Transverse colon (tissue), 4 donors: ENCODE measurements at regions of chr6 and their contacts with region 1.

Region 1: GRCh38 chr6:12605888-12606345 is 110.7 kb upstream of the PHACTR1 start:
- DNase-seq: peak; percentile 54
- H3K4me3 ChIP-seq: no peak overlapping the region
- H3K27ac ChIP-seq: no peak overlapping the region
- H3K4me1 ChIP-seq: peaks cover 0 to 13% (median 0%) of the 10 kb centered on the region in 4 donors
- H3K27me3 ChIP-seq: no peaks in the 10 kb centered on the region
- CTCF ChIP-seq: peak; percentile 63 to 79 (median 67)
- EP300 ChIP-seq: no peak
- POLR2A ChIP-seq: no peak

Region 2: DNA sequence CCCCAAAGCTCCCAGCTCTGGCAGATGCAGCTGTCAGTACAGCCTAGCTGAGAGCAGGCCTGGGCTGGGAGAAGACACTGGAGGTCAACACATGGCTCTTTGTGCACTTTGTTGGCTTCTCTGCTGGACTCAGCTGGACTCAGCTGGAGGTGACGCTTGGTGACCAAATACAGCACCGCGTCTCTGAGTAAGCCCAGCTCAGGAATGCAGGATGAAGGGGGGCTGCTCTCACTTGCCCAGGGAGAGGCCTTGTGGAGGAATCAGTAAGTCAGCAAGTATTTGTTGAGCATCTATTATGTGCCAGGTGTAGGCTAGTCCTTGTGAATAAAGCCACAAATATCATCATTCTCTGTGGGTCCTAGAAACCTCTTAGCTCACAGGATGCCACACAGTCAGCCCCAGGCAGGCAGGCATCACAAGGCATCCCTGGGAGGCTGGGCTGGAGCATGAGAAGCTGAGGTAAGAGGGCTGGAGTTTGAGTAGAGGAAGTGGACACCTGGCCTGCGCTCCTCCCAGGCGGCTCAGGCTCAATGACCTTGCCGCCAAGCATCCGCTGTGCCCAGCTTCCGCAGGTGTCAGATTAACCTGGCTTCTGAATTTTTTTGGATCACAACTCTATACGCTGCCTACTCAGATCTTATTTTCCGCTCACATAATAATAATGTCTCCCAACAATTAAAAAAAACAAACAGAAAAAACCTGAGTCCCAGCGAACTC is 973.0 kb before region 1 on chr6:
- in situ Hi-C with region 1: loop called in 2 of 4 experiments (anchors 25 kb)
- intact Hi-C with region 1: no loop called
- DNase-seq: no peak
- H3K4me3 ChIP-seq: no peak overlapping the region
- H3K27ac ChIP-seq: no peak overlapping the region
- H3K4me1 ChIP-seq: no peaks in the 10 kb centered on the region
- H3K27me3 ChIP-seq: no peaks in the 10 kb centered on the region
- CTCF ChIP-seq: no peak
- EP300 ChIP-seq: no peak
- POLR2A ChIP-seq: no peak

Region 3: DNA sequence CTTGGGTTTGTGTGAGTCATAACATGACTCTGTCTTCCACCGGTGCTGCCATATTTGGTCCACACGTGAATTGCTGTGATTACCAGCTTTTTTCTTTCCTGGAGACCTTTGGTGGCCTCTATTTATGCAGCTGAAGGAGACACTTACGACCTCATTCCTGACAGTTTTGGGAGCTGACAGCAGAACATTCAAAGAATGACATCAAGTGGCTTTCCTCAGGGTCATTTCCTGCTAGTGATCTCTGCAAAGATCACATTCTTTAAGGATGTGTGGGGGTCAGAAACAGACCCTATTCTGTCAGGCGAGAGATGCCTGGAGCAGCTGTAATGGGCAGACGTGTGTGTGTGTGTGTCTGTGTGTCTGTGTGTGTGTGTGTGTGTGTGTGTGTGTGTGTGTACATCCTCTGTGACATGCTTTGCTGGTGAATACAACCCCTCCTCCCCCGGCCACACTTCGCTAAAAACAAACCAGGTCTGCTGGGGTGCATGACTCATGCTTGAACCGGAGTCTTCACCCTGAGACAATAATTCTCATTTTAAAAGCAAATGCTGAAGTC is 952.8 kb before region 1 on chr6:
- in situ Hi-C with region 1: loop called (anchors 25 kb)
- intact Hi-C with region 1: no loop called
- DNase-seq: no peak
- H3K4me3 ChIP-seq: no peak overlapping the region
- H3K27ac ChIP-seq: no peak overlapping the region
- H3K4me1 ChIP-seq: peaks cover 4 to 15% (median 10%) of the 10 kb centered on the region in 4 donors
- H3K27me3 ChIP-seq: no peaks in the 10 kb centered on the region
- CTCF ChIP-seq: no peak
- EP300 ChIP-seq: no peak
- POLR2A ChIP-seq: no peak

Region 4: DNA sequence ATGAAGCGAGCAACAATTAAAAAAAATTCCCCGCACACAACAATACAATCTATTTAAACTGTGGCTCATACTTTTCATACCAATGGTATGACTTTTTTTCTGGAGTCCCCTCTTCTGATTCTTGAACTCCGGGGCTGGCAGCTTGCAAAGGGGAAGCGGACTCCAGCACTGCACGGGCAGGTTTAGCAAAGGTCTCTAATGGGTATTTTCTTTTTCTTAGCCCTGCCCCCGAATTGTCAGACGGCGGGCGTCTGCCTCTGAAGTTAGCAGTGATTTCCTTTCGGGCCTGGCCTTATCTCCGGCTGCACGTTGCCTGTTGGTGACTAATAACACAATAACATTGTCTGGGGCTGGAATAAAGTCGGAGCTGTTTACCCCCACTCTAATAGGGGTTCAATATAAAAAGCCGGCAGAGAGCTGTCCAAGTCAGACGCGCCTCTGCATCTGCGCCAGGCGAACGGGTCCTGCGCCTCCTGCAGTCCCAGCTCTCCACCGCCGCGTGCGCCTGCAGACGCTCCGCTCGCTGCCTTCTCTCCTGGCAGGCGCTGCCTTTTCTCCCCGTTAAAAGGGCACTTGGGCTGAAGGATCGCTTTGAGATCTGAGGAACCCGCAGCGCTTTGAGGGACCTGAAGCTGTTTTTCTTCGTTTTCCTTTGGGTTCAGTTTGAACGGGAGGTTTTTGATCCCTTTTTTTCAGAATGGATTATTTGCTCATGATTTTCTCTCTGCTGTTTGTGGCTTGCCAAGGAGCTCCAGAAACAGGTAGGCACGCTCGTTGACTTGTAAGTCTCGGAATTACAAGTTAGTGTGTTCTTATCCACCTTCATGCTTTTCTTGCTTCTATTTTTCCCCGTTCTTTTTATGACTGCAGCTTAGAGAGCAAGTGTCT is 315.7 kb before region 1 on chr6 and contains the start of gene EDN1:
- in situ Hi-C with region 1: loop called in 2 of 4 experiments (anchors 5 to 10 kb)
- intact Hi-C with region 1: loop called (anchors 10 kb)
- DNase-seq: peak; percentile 85
- H3K4me3 ChIP-seq: peak within 1 kb of the TSS; percentile 18 to 56 (median 38)
- H3K27ac ChIP-seq: peak within 1 kb of the TSS; percentile 73 to 82 (median 76)
- H3K4me1 ChIP-seq: peaks cover 1 to 71% (median 18%) of the 10 kb centered on the region in 4 donors
- H3K27me3 ChIP-seq: no peaks in the 10 kb centered on the region
- CTCF ChIP-seq: peak; percentile 51 to 74 (median 57)
- EP300 ChIP-seq: no peak
- POLR2A ChIP-seq: peak; percentile 81
- total RNA-seq, gene EDN1: 3.6 to 23.2 (median 14.2) TPM

Region 5: DNA sequence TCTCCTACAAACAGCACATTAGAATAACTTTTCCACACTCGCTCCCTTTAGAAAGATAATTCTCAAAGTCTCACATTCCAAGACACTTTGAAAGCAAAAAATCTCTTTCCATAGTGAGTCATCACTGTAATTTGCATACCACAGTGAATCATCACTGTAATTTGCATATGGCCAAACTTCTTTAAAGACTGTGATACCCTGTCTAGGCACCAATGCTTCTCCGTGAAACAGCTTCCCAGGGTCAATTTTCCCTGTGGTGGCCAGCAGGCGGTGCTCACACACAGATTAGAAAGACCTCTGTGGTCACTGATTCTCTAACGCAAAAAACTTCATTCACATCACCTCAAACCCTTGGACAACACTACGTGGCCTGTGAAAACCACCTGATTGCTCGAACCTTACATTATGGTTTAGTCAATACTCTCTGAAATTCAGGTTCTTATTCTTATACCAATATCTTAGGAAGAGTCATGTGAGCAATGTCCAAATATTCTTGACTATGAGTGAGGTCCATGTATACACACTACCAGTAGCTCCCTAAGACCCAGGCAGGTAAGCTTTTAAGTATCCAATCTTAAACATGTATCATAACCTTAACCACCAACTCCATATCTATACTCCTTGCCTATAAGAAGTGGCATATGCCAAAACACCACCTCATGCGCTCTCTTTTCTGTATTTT is 32.2 kb after region 1 on chr6:
- in situ Hi-C with region 1: no loop called
- intact Hi-C with region 1: no loop called
- DNase-seq: peak; percentile 35
- H3K4me3 ChIP-seq: no peak overlapping the region
- H3K27ac ChIP-seq: no peak overlapping the region
- H3K4me1 ChIP-seq: no peaks in the 10 kb centered on the region
- H3K27me3 ChIP-seq: peaks cover 7% of the 10 kb centered on the region
- CTCF ChIP-seq: peak; percentile 41 to 60 (median 53)
- EP300 ChIP-seq: no peak
- POLR2A ChIP-seq: no peak